ENCODE measurements at regions of chr5 and their contacts with region 1.

Region 1: GRCh38 chr5:73540192-73540591 is 25.2 kb downstream of the ANKRA2 start:
- DNase-seq: no peak
- H3K4me3 ChIP-seq: no peak overlapping the region
- H3K27ac ChIP-seq: no peak overlapping the region
- H3K4me1 ChIP-seq: no peaks in the 10 kb centered on the region
- H3K27me3 ChIP-seq: no peaks in the 10 kb centered on the region
- CTCF ChIP-seq: no peak

Region 2: DNA sequence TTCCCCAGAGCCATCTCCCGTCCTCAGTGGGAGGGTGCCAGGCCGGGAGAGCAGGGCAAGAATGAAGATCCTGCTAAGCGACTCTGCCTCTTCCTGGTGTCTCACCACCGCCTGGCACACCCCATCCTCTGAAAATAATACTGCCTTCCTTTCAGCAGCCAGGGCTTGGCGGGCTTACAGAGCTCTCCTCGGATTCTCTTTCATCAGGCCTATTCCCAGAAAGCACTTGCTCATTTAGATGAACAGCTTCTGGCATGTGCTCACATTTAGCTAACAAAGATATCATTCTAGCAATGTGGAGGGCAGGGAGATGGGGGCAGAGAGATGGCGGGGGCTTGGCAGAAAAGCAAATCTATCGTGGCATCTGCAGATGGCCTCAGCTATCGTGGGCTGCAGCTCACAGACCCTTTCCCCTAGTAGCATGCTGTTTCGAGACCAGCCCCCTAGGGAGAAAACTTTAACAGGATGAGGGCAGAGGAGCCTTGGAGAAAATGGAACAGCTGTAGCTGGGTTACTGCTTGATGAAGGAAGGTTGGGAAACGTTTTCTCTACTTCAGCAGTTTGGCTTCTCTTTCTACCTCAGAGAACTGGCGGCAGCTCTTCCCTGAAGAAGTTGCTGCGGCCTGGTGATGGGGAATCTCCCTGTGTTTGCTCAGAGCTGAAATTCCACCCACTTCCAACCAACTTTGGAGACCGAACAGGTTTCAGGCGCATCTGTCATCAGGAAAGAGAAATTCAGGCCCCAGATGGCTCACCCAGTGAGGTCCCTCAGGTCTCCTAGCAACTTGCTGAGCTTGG is 265.1 kb before region 1 on chr5:
- CTCF ChIA-PET with region 1: interaction called, 11 read pairs
- POLR2A ChIA-PET with region 1: no interaction called
- intact Hi-C with region 1: no loop called
- DNase-seq: no peak
- H3K4me3 ChIP-seq: no peak overlapping the region
- H3K27ac ChIP-seq: no peak overlapping the region
- H3K4me1 ChIP-seq: peaks cover 3% of the 10 kb centered on the region
- H3K27me3 ChIP-seq: no peaks in the 10 kb centered on the region
- CTCF ChIP-seq: no peak

Region 3: DNA sequence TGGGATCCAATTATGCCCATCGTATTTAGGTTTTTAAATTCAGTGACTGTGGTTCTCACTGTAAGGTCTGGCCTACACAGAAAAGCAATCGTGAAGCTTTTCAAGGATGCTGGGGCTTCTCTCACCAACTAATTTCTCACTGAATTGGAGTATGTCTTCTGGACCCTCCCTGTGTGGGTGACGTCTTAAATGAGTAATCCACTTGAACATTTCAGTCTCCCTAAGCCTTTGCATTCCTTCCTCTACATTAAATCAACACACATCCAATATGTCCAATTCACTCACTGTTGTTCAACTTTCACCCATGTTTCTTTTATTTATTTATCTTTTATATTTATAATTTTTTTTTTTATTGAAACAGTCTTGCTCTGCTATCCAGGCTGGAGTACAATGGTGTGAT is 54.5 kb before region 1 on chr5:
- CTCF ChIA-PET with region 1: no interaction called
- POLR2A ChIA-PET with region 1: no interaction called
- intact Hi-C with region 1: no loop called
- DNase-seq: no peak
- H3K4me3 ChIP-seq: no peak overlapping the region
- H3K27ac ChIP-seq: no peak overlapping the region
- H3K4me1 ChIP-seq: no peaks in the 10 kb centered on the region
- H3K27me3 ChIP-seq: no peaks in the 10 kb centered on the region
- CTCF ChIP-seq: no peak

Region 4: GRCh38 chr5:73519531-73520283 is 20.5 kb before region 1 on chr5:
- CTCF ChIA-PET with region 1: interaction called, 7 read pairs
- POLR2A ChIA-PET with region 1: no interaction called
- intact Hi-C with region 1: loop called (anchors 1 kb)
- DNase-seq: peak; percentile 88
- H3K4me3 ChIP-seq: no peak overlapping the region
- H3K27ac ChIP-seq: no peak overlapping the region
- H3K4me1 ChIP-seq: no peaks in the 10 kb centered on the region
- H3K27me3 ChIP-seq: no peaks in the 10 kb centered on the region
- CTCF ChIP-seq: peak; percentile 81

Region 5: DNA sequence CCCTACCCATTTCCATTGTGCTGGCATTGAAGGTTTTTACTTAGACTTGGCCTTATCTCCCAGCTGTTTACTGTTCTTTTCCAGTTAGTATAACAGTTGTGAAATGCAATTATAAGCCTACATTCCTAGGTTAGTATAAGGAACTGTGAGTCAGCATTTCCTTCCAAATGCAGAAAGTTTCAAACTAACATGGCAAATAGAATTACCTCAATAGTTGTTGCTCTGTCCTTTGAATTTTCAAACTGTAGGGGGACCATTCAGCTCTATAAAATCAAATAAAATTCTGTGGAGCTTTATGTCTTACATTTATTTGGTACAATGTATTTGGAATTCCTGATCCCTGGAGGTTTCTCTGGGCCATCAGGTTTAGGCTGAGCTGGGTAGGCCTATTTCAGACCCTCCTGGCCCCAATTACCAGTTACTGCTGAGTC is 133.0 kb after region 1 on chr5:
- CTCF ChIA-PET with region 1: no interaction called
- POLR2A ChIA-PET with region 1: no interaction called
- intact Hi-C with region 1: no loop called
- DNase-seq: peak; percentile 48
- H3K4me3 ChIP-seq: no peak overlapping the region
- H3K27ac ChIP-seq: no peak overlapping the region
- H3K4me1 ChIP-seq: peaks cover 6% of the 10 kb centered on the region
- H3K27me3 ChIP-seq: no peaks in the 10 kb centered on the region
- CTCF ChIP-seq: no peak

Region 6: DNA sequence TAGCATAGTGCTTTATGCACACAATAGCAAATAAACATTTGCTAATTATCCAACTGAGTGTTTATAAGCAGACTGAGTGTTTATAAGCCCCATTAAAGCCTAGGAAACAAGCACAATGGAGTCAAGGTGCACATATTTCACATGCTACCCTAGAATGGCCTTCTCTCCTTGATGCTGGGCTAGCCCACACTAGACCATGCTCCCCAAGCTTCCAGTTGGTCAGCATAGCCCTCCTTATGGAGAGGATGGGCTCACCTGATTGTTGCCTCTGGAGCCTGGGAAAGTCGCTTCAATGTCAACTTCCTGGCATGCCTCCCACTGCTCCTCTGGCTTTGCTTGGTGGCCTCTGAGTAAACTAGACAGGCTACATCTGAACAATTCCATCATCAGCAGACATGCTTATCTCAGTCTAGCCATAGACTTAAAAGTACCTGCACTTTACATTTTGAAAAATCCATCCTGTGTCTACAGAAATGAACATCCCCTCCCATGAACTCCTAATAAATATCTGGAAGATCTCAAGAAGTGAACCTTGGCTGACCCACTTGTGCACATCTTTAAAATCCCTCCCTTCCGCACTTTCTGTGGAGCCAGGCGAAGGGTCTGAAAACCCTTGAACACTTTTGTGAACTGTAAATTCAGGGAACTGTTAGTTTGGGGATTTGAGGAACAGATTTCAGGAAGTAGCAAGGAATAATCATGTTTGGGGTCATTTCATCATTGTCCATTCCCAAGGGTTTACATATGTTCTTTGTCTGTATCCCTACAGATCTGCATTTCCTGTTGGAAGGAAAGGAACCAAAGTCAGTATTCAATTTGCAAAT is 572.4 kb after region 1 on chr5:
- CTCF ChIA-PET with region 1: no interaction called
- POLR2A ChIA-PET with region 1: no interaction called
- intact Hi-C with region 1: no loop called
- DNase-seq: no peak
- H3K4me3 ChIP-seq: no peak overlapping the region
- H3K27ac ChIP-seq: no peak overlapping the region
- H3K4me1 ChIP-seq: no peaks in the 10 kb centered on the region
- H3K27me3 ChIP-seq: peaks cover 7% of the 10 kb centered on the region
- CTCF ChIP-seq: no peak